GM12878 (cell line): ENCODE measurements at regions of chr14 and their contacts with region 1.

Region 1: DNA sequence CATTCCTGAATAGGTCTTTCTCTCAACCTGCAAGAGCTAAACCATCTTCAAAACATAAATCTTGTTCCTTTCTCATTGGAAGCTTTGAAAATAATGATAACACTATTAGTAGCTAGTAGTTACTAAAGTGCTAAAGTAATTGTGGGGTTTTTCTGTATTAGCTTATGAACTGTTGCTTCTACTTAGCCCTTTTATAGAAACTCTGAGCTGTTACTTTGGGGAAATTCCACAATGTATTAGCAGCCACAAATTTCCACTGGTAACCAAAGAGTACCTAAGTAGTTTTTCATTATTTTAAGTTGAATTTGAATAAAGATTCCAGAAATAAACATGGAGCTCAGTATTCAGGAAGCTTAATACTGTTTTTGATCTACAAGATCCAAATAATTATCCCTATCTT is 6.4 kb upstream of the MAPK1IP1L start:
- DNase-seq: no peak
- ATAC-seq: peak; percentile 82
- H3K4me3 ChIP-seq: no peak overlapping the region
- H3K27ac ChIP-seq: peak overlapping the region; percentile 19; the same call in 1 of the 2 replicates
- H3K4me1 ChIP-seq: 0 out of 2 replicates have a peak, but pooled peaks cover 4% of the 10 kb centered on the region
- H3K27me3 ChIP-seq: no peaks in the 10 kb centered on the region
- CTCF ChIP-seq: no peak
- EP300 ChIP-seq: no peak
- POLR2A ChIP-seq: no peak
- RAD21 ChIP-seq: no peak

Region 2: DNA sequence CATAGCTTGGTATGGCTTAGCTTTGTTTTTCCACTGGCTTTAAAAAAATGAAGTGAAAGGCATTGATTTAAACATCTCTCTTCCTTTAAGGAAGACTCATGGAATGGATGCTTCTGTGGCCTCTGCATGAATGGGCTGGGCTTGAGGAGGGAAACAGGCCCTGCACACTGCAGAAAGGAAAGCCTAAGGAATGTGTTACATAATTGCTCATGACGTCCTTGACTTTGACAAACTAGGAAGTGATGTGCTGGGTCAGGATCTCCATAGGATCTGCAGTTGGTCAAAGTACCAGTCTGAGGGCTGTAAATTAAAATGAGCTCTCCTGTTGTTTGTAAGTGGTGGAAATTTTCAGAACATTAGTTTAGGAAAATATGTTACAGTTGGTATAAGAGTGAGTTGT is 465.5 kb before region 1 on chr14:
- CTCF ChIA-PET with region 1: no interaction called
- POLR2A ChIA-PET with region 1: no interaction called
- RAD21 ChIA-PET with region 1: no interaction called
- SMC1A ChIA-PET with region 1: no interaction called
- in situ Hi-C with region 1: no loop called
- intact Hi-C with region 1: no loop called
- DNase-seq: no peak
- ATAC-seq: no peak
- H3K4me3 ChIP-seq: no peak overlapping the region
- H3K27ac ChIP-seq: no peak overlapping the region
- H3K4me1 ChIP-seq: no peaks in the 10 kb centered on the region
- H3K27me3 ChIP-seq: no peaks in the 10 kb centered on the region
- CTCF ChIP-seq: no peak
- EP300 ChIP-seq: no peak
- POLR2A ChIP-seq: no peak
- RAD21 ChIP-seq: no peak

Region 3: DNA sequence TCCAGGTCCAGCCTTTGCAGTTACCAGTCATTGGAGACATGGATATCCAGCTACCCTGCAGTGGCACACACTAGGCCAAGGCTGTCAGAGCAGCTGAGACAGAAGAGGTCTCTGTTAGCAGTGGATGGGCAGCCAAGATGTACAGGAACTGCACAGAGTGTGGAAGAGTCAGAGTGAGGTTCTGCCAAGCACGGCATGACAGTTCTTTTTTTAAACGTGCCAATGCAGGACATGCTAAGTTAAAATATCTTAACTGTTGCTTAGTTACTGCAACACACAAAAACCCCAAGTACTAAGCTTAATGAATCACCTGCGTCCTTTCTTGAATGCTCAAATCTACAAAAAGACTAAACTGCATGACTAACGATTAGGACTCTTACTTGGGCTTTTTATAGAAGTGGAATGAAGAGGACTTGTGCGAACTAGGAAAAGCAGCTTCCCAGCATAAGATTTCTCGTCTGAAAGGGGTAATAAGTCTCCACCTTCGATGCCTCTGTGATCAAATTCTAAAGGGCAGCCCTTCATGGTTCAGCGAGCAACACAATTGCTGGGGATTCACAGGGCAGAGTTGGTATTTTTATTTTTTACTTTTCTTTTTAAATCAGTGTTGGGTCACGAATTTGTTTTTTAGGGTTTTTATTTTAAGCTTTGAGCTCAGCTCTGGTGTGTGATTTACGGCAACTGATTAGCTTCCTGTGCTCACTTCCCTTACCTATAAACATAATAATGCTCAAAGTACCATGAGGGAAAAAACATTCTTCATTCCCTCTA is 27.0 kb after region 1 on chr14:
- CTCF ChIA-PET with region 1: interaction called, 13 read pairs
- POLR2A ChIA-PET with region 1: interaction called, 12 read pairs
- RAD21 ChIA-PET with region 1: interaction called, 35 read pairs
- SMC1A ChIA-PET with region 1: interaction called, 30 read pairs
- in situ Hi-C with region 1: no loop called
- intact Hi-C with region 1: no loop called
- DNase-seq: peak; percentile 92
- ATAC-seq: peak; percentile 76
- H3K4me3 ChIP-seq: 0 out of 2 replicates have a peak overlapping the region, but pooled peaks have one; percentile 28
- H3K27ac ChIP-seq: peak overlapping the region; percentile 82
- H3K4me1 ChIP-seq: peaks cover 54% of the 10 kb centered on the region
- H3K27me3 ChIP-seq: no peaks in the 10 kb centered on the region
- CTCF ChIP-seq: no peak
- EP300 ChIP-seq: peak in 1 of 2 experiments; percentile 51; a peak in 2 of 4 replicates
- POLR2A ChIP-seq: peak; percentile 50; the same call in 1 of the 2 replicates
- RAD21 ChIP-seq: no peak